Activated T-helper 1 cell treated with anti-CD3 and anti-CD28 coated beads, Interleukin-12 subunit alpha, Interleukin-12 subunit beta, Interleukin-2, Interleukin-4 antibody, amounts not matched to agents 30 ng/mL and 10 ng/mL and 1 ng/mL, durations not matched to agents 14 hours and 24 hours and 36 hours (primary cell): ENCODE measurements at regions of chr2 and their contacts with region 1.

Region 1: GRCh38 chr2:234191819-234192407 is 141.4 kb downstream of the SPP2 start:
- DNase-seq: no peak
- H3K4me3 Mint-ChIP-seq: no peak overlapping the region
- H3K27ac Mint-ChIP-seq: no peak overlapping the region
- H3K4me1 Mint-ChIP-seq: no peaks in the 10 kb centered on the region
- H3K27me3 Mint-ChIP-seq: peaks cover 18% of the 10 kb centered on the region

Region 2: GRCh38 chr2:234091432-234091879 is 100.5 kb before region 1 on chr2:
- intact Hi-C with region 1: no loop called
- DNase-seq: no peak
- H3K4me3 Mint-ChIP-seq: no peak overlapping the region
- H3K27ac Mint-ChIP-seq: no peak overlapping the region
- H3K4me1 Mint-ChIP-seq: no peaks in the 10 kb centered on the region
- H3K27me3 Mint-ChIP-seq: peaks cover 14% of the 10 kb centered on the region

Region 3: GRCh38 chr2:234146087-234146826 is 45.7 kb before region 1 on chr2:
- intact Hi-C with region 1: loop called (anchors 1 kb)
- DNase-seq: no peak
- H3K4me3 Mint-ChIP-seq: peak overlapping the region; percentile 43
- H3K27ac Mint-ChIP-seq: peak overlapping the region; percentile 10
- H3K4me1 Mint-ChIP-seq: peaks cover 35% of the 10 kb centered on the region
- H3K27me3 Mint-ChIP-seq: peaks cover 5% of the 10 kb centered on the region

Region 4: DNA sequence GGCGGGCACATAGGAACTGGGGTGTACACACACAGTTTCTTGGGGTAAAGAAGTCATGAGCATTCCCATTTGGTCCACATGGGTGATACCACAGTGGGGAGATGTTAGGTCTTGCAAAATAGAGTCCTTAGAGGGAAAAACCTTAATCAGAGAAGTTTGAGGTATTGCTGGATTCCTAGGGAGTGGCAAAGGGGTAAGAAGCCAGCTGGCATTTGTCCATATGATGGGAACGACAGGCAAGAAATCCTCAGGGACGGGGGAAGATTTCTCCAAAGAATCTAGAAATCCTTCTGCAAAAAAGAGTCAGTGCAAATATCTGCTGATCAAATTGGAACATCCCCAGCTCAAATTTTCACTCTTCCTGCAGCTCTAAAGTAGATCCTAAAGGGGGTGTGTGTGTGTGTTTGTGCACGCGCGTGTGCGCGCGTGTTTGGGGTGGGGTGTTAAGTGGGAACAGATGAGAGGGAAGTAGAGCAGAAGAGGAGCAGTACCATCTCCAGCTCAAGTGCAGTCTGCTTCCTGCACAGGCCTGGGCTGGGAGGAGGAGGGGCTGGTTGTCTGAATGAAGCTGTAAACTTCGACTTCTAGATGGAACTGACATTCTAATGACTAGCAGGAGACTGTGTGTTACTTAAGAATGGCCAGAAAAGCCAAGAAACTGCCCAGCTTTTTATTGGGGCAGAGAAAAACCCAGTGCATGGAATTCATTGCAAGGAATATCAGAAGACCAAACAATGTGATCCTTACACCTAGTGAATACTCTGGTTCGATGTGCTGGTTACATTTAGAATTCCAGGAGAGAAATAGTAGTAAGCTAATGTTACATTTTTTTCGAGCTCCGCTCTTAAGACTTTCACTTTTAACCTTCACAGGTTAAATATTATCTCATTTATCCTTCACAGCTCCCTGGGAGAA is 26.6 kb after region 1 on chr2:
- intact Hi-C with region 1: no loop called
- DNase-seq: no peak
- H3K4me3 Mint-ChIP-seq: no peak overlapping the region
- H3K27ac Mint-ChIP-seq: no peak overlapping the region
- H3K4me1 Mint-ChIP-seq: peaks cover 18% of the 10 kb centered on the region
- H3K27me3 Mint-ChIP-seq: peaks cover 2% of the 10 kb centered on the region